Left colon (tissue), 2 donors: ENCODE measurements at regions of chr7 and their contacts with region 1.

Region 1: DNA sequence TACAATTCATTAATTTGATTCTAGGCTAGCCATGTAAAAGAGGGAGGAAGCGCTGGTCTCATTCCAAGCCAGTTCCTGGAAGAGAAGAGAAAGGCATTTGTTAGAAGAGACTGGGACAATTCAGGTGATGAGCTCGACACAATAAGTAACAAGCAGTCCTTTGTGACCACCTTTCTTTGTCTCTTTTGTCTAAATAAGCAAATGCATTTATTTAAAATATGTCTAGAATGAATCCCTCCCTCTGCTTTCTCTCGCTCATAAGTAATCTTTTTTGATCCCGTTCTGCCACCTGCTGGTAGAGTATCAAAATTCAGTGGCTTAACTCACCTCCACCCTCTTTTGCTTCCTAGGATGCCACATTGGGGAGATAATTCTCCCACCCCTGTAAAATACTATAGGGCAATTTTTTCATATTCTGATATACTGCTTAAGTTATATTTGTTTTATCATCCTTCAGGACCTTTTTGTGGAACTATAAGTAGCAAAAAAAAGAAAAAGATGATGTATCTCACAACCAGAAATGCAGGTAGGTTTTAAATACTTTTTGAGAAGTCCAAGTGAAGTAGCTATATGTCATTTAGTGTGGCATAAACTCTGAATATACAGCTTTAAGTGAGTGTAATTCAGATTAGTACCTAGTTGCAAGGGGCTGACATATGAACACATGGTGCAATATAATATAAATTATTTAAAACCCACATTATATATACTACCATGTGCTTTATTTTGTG is 91.5 kb downstream of the GSDME start:
- DNase-seq: peak in 1 of 2 donors; percentile 30
- ATAC-seq: peak; percentile 55

Region 2: DNA sequence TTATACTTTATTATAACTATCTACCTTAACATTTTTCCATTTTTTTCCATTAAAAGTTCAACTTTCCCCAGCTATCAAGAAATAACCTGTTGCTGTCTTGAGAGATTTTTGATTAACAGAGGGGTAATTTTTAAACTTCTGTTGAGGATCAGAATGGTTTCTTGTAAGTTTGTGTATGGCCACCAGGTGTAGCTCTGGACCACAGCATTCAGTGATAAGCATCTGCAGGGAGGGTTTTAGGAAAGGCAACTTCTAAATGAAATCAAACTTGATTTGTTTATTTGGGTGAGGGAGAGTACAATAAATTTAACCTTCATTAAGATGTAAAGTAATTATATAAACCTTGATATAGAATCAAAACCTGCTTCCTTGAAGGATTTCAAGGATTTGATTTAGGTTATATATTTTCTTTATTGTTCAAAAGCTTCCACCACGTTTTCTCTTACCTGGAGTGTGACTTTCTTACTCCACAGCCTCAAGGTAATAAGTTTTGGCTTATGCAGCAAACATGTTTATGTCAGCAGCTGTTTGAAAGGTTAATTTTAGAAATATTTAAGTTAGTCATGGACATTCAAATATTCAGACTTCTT is 802.4 kb before region 1 on chr7:
- intact Hi-C with region 1: loop called in 1 of 2 experiments (anchors 10 kb)
- DNase-seq: no peak
- ATAC-seq: no peak

Region 3: DNA sequence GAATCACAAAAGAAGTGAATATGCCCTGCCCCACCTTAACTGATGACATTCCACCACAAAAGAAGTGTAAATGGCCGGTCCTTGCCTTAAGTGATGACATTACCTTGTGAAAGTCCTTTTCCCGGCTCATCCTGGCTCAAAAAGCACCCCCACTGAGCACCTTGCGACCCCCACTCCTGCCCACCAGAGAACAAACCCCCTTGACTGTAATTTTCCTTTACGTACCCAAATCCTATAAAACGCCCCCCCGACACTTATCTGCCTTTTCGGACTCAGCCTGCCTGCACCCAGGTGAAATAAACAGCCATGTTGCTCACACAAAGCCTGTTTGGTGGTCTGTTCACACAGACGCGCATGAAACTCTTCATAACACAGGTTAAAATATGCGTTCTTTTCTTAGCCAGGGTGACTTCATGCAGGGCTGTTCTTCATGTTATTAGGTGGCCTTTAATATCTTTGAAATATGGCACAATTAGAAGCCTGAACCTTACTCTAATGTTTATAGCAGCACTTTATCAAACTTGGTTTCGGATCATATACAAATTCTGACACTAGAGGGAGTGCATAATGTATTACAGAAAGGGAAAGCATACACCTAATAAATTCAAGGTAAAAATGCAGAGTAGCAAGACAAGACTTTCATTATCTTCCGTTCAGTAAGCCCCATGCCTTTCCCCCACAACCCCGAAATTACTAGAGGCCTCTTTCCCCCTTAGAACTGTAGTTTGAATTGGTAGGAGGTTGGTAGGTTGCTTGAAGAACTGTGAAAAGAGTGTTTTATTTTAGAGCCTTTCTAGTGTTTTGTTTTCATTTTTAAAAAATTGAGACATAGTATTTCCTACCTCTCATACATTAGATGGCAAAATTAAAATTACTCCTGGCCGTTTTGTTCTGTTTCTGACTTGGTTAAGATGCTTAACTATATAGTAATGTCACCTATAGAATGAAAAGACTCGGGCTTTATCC is 263.8 kb before region 1 on chr7:
- intact Hi-C with region 1: loop called in 1 of 2 experiments (anchors 10 kb)
- DNase-seq: no peak
- ATAC-seq: no peak

Region 4: GRCh38 chr7:24572997-24573625 is 92.6 kb before region 1 on chr7 and contains the start of gene PALS2:
- intact Hi-C with region 1: loop called in 1 of 2 experiments (anchors 10 kb)
- DNase-seq: peak; percentile 77 to 81
- ATAC-seq: peak; percentile 88
- total RNA-seq, gene PALS2: 6.7 TPM